ENCODE measurements at regions of chr6 and their contacts with region 1.

Region 1: GRCh38 chr6:24394780-24395437 is 7.8 kb upstream of the MRS2 start:
- DNase-seq: no peak
- ATAC-seq: peak; percentile 64 to 78
- H3K4me3 ChIP-seq: no peak overlapping the region
- H3K27ac ChIP-seq: no peak overlapping the region
- H3K4me1 ChIP-seq: no peaks in the 10 kb centered on the region
- H3K27me3 ChIP-seq: peaks cover 3% of the 10 kb centered on the region
- CTCF ChIP-seq: no peak

Region 2: GRCh38 chr6:24283043-24283985 is 111.6 kb before region 1 on chr6:
- intact Hi-C with region 1: loop called (anchors 10 kb)
- DNase-seq: peak; percentile 76
- ATAC-seq: peak; percentile 91 to 96
- H3K4me3 ChIP-seq: peak overlapping the region; percentile 26
- H3K27ac ChIP-seq: no peak overlapping the region
- H3K4me1 ChIP-seq: peaks cover 14% of the 10 kb centered on the region
- H3K27me3 ChIP-seq: no peaks in the 10 kb centered on the region
- CTCF ChIP-seq: peak; percentile 63